Tibial artery (tissue), 4 donors: ENCODE measurements at regions of chr12 and their contacts with region 1.

Region 1: GRCh38 chr12:23899434-23899833 is 50.0 kb downstream of the SOX5 start:
- DNase-seq: no peak
- H3K4me3 ChIP-seq: no peak overlapping the region
- H3K27ac ChIP-seq: no peak overlapping the region
- H3K4me1 ChIP-seq: no peaks in the 10 kb centered on the region
- H3K27me3 ChIP-seq: no peaks in the 10 kb centered on the region
- CTCF ChIP-seq: no peak

Region 2: GRCh38 chr12:23472329-23472971 is 427.0 kb before region 1 on chr12:
- intact Hi-C with region 1: no loop called
- DNase-seq: no peak
- H3K4me3 ChIP-seq: no peak overlapping the region
- H3K27ac ChIP-seq: no peak overlapping the region
- H3K4me1 ChIP-seq: no peaks in the 10 kb centered on the region
- H3K27me3 ChIP-seq: no peaks in the 10 kb centered on the region
- CTCF ChIP-seq: no peak

Region 3: DNA sequence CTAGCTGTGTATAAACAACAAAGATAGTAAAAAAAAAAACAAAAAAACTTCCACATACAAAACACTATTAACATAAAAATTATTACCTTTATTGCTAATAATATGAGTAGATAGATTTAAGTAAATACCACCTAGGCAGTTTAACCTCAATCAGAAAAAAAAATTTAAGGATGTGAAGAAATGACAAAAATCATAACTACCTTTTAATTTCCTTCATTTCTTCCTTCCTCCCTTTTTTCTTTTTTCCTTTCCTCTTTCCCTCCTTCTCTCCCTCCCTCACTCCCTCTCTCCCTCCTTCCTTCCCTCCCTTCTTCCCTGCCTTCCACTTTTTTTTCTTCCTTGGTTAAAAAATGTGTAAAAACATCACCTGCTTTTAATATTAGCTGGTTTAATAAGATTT is 31.6 kb before region 1 on chr12:
- intact Hi-C with region 1: loop called (anchors 2 kb)
- DNase-seq: no peak
- H3K4me3 ChIP-seq: no peak overlapping the region
- H3K27ac ChIP-seq: no peak overlapping the region
- H3K4me1 ChIP-seq: no peaks in the 10 kb centered on the region
- H3K27me3 ChIP-seq: no peaks in the 10 kb centered on the region
- CTCF ChIP-seq: no peak

Region 4: DNA sequence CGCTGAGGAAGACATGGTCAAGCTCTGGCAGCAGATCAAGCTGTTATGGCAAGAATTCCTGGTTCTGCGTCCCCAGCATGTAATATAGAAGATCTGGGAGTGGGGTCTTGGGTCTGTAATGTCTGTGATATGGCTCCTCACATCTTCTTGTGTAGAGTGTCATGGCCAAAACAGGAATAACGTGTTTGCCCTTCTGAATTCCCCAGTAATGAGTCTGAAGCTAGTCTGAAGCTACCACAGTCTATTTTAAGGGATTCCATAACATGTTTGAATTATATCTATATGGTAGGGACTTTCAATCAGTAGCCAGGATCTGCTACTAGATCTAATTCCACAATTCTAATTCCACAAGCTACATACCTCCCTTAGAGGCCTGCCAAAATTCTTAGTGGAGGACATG is 81.4 kb after region 1 on chr12:
- intact Hi-C with region 1: no loop called
- DNase-seq: no peak
- H3K4me3 ChIP-seq: no peak overlapping the region
- H3K27ac ChIP-seq: no peak overlapping the region
- H3K4me1 ChIP-seq: peaks cover 0 to 22% (median 0%) of the 10 kb centered on the region in 4 donors
- H3K27me3 ChIP-seq: no peaks in the 10 kb centered on the region
- CTCF ChIP-seq: no peak

Region 5: GRCh38 chr12:24012528-24012927 is 113.1 kb after region 1 on chr12:
- intact Hi-C with region 1: no loop called
- DNase-seq: no peak
- H3K4me3 ChIP-seq: no peak overlapping the region
- H3K27ac ChIP-seq: no peak overlapping the region
- H3K4me1 ChIP-seq: no peaks in the 10 kb centered on the region
- H3K27me3 ChIP-seq: no peaks in the 10 kb centered on the region
- CTCF ChIP-seq: no peak

Region 6: DNA sequence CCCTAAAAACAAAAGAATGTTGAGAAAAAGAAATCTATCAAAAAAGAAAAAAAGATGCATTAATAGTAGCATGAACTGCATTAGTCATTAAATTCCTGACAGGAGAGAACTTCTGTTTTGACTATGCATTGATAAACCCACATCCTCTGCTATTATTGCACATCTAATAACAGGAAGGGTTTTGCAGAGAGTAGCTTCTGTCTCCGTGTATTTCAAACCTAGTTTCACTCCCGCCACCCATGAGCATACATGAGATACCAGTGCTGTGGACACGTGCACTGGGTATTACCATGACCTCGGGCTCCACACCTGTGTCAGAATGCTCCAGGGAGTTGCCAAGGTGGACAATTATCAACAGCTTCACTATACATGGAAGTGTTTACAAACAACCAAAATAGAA is 499.2 kb after region 1 on chr12:
- intact Hi-C with region 1: no loop called
- DNase-seq: no peak
- H3K4me3 ChIP-seq: no peak overlapping the region
- H3K27ac ChIP-seq: no peak overlapping the region
- H3K4me1 ChIP-seq: peaks cover 0 to 30% (median 7%) of the 10 kb centered on the region in 4 donors
- H3K27me3 ChIP-seq: no peaks in the 10 kb centered on the region
- CTCF ChIP-seq: no peak